ENCODE measurements at regions of chr21 and their contacts with region 1.

Region 1: GRCh38 chr21:36156339-36156814 is 247 bp upstream of the DOP1B start:
- DNase-seq: peak; percentile 99 to 100 (median 100)
- ATAC-seq: peak; percentile 94
- H3K4me3 ChIP-seq: peak overlapping the region; percentile 81
- H3K4me3 Mint-ChIP-seq: peak overlapping the region; percentile 71 to 91 (median 86)
- H3K27ac ChIP-seq: peak overlapping the region; percentile 81
- H3K27ac Mint-ChIP-seq: peak overlapping the region in 8 of 9 donors; percentile 46 to 88 (median 58)
- H3K4me1 ChIP-seq: peaks cover 11% of the 10 kb centered on the region in 2 donors
- H3K4me1 Mint-ChIP-seq: peaks cover 11 to 45% (median 33%) of the 10 kb centered on the region in 7 donors
- H3K27me3 ChIP-seq: no peaks in the 10 kb centered on the region
- H3K27me3 Mint-ChIP-seq: peaks cover 0 to 13% (median 0%) of the 10 kb centered on the region in 5 donors

Region 2: GRCh38 chr21:36005018-36005417 is 151.4 kb before region 1 on chr21:
- CTCF ChIA-PET with region 1: no interaction called
- POLR2A ChIA-PET with region 1: no interaction called
- intact Hi-C with region 1: no loop called
- DNase-seq: no peak
- ATAC-seq: no peak
- H3K4me3 ChIP-seq: no peak overlapping the region
- H3K4me3 Mint-ChIP-seq: no peak overlapping the region
- H3K27ac ChIP-seq: no peak overlapping the region
- H3K27ac Mint-ChIP-seq: no peak overlapping the region
- H3K4me1 ChIP-seq: no peaks in the 10 kb centered on the region
- H3K4me1 Mint-ChIP-seq: no peaks in the 10 kb centered on the region
- H3K27me3 ChIP-seq: no peaks in the 10 kb centered on the region
- H3K27me3 Mint-ChIP-seq: peaks cover 8 to 28% (median 11%) of the 10 kb centered on the region in 5 donors

Region 3: GRCh38 chr21:36060159-36060921 is 96.0 kb before region 1 on chr21 and contains the start of gene SETD4:
- CTCF ChIA-PET with region 1: no interaction called
- POLR2A ChIA-PET with region 1: no interaction called
- intact Hi-C with region 1: loop called in 1 of 2 experiments (anchors 1 kb)
- DNase-seq: peak; percentile 91 to 97 (median 94)
- ATAC-seq: peak; percentile 93
- H3K4me3 ChIP-seq: peak within 1 kb of the TSS; percentile 80
- H3K4me3 Mint-ChIP-seq: peak within 1 kb of the TSS; percentile 88 to 98 (median 96)
- H3K27ac ChIP-seq: peak within 1 kb of the TSS; percentile 89
- H3K27ac Mint-ChIP-seq: peak within 1 kb of the TSS; percentile 96 to 98 (median 97)
- H3K4me1 ChIP-seq: no peaks in the 10 kb centered on the region
- H3K4me1 Mint-ChIP-seq: peaks cover 2 to 38% (median 24%) of the 10 kb centered on the region in 7 donors
- H3K27me3 ChIP-seq: no peaks in the 10 kb centered on the region
- H3K27me3 Mint-ChIP-seq: peaks cover 0 to 4% (median 0%) of the 10 kb centered on the region in 5 donors
- total RNA-seq, gene SETD4: 17.1 to 31.5 (median 20.9) TPM

Region 4: GRCh38 chr21:36141513-36141925 is 14.9 kb before region 1 on chr21:
- CTCF ChIA-PET with region 1: interaction called, 26 read pairs
- POLR2A ChIA-PET with region 1: interaction called, 5 read pairs
- intact Hi-C with region 1: loop called (anchors 1 kb)
- DNase-seq: peak; percentile 50 to 92 (median 84)
- ATAC-seq: peak; percentile 99
- H3K4me3 ChIP-seq: no peak overlapping the region
- H3K4me3 Mint-ChIP-seq: peak overlapping the region in 5 of 10 donors; percentile 1 to 15 (median 3)
- H3K27ac ChIP-seq: peak overlapping the region; percentile 74
- H3K27ac Mint-ChIP-seq: peak overlapping the region; percentile 16 to 92 (median 83)
- H3K4me1 ChIP-seq: peaks cover 18 to 19% of the 10 kb centered on the region in 2 donors
- H3K4me1 Mint-ChIP-seq: peaks cover 11 to 42% (median 39%) of the 10 kb centered on the region in 7 donors
- H3K27me3 ChIP-seq: no peaks in the 10 kb centered on the region
- H3K27me3 Mint-ChIP-seq: no peaks in the 10 kb centered on the region

Region 5: DNA sequence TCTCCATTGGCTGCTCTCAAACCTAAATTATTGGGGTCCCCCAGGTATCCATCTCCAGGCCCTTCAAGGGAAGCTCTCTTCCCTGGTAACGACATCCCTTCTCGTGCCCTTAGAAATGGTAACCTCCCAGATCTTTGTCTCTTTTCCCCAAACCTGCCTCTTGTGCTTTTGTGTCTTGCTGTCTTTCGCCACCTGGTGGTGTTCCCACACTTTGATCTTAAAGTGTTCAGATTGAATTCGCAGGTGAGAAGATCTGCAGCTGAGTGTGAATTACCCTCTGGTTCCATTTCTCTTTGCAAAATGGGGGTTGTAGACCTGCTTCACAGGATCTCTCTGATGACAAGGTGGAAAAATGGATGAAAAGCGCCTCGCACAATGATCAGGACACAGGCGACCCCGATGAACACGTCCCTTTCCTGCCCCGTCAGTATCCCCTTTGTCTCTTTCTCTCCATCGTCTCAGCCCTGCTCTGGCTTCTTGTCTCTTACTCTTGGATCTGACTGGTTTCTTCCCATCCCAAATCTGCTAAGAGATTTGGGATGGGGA is 53.3 kb after region 1 on chr21:
- CTCF ChIA-PET with region 1: interaction called, 7 read pairs
- POLR2A ChIA-PET with region 1: interaction called, 3 read pairs
- intact Hi-C with region 1: loop called (anchors 1 kb)
- DNase-seq: peak in 7 of 9 donors; percentile 20 to 57 (median 51)
- ATAC-seq: no peak
- H3K4me3 ChIP-seq: no peak overlapping the region
- H3K4me3 Mint-ChIP-seq: no peak overlapping the region
- H3K27ac ChIP-seq: no peak overlapping the region
- H3K27ac Mint-ChIP-seq: peak overlapping the region in 2 of 9 donors; percentile 3 to 38
- H3K4me1 ChIP-seq: no peaks in the 10 kb centered on the region
- H3K4me1 Mint-ChIP-seq: peaks cover 1 to 18% (median 9%) of the 10 kb centered on the region in 7 donors
- H3K27me3 ChIP-seq: no peaks in the 10 kb centered on the region
- H3K27me3 Mint-ChIP-seq: no peaks in the 10 kb centered on the region

Region 6: GRCh38 chr21:36297921-36298594 is 141.7 kb after region 1 on chr21:
- CTCF ChIA-PET with region 1: no interaction called
- POLR2A ChIA-PET with region 1: interaction called, 5 read pairs
- intact Hi-C with region 1: loop called in 1 of 2 experiments (anchors 1 kb)
- DNase-seq: peak; percentile 35 to 89 (median 87)
- ATAC-seq: peak; percentile 99
- H3K4me3 ChIP-seq: peak overlapping the region; percentile 52
- H3K4me3 Mint-ChIP-seq: peak overlapping the region; percentile 71 to 88 (median 84)
- H3K27ac ChIP-seq: peak overlapping the region; percentile 84
- H3K27ac Mint-ChIP-seq: peak overlapping the region; percentile 91 to 100 (median 98)
- H3K4me1 ChIP-seq: peaks cover 21 to 36% of the 10 kb centered on the region in 2 donors
- H3K4me1 Mint-ChIP-seq: peaks cover 24 to 53% (median 40%) of the 10 kb centered on the region in 7 donors
- H3K27me3 ChIP-seq: no peaks in the 10 kb centered on the region
- H3K27me3 Mint-ChIP-seq: no peaks in the 10 kb centered on the region

Region 7: GRCh38 chr21:36385233-36386030 is 229.1 kb after region 1 on chr21 and contains the start of gene CHAF1B:
- CTCF ChIA-PET with region 1: no interaction called
- POLR2A ChIA-PET with region 1: no interaction called
- intact Hi-C with region 1: loop called (anchors 1 kb)
- DNase-seq: peak; percentile 63 to 94 (median 82)
- ATAC-seq: peak; percentile 99
- H3K4me3 ChIP-seq: peak within 1 kb of the TSS; percentile 77
- H3K4me3 Mint-ChIP-seq: peak within 1 kb of the TSS; percentile 70 to 89 (median 85)
- H3K27ac ChIP-seq: peak within 1 kb of the TSS; percentile 68
- H3K27ac Mint-ChIP-seq: peak within 1 kb of the TSS in 8 of 9 donors; percentile 7 to 83 (median 56)
- H3K4me1 ChIP-seq: peaks cover 0 to 4% of the 10 kb centered on the region in 2 donors
- H3K4me1 Mint-ChIP-seq: peaks cover 4 to 30% (median 6%) of the 10 kb centered on the region in 7 donors
- H3K27me3 ChIP-seq: no peaks in the 10 kb centered on the region
- H3K27me3 Mint-ChIP-seq: no peaks in the 10 kb centered on the region
- total RNA-seq, gene CHAF1B: 1.5 to 21.4 (median 4.0) TPM

Region 8: GRCh38 chr21:37267269-37268184 is 1111.2 kb after region 1 on chr21 and contains the start of gene VPS26C:
- CTCF ChIA-PET with region 1: no interaction called
- POLR2A ChIA-PET with region 1: no interaction called
- intact Hi-C with region 1: loop called (anchors 1 to 5 kb)
- DNase-seq: peak; percentile 91 to 98 (median 97)
- ATAC-seq: peak; percentile 93
- H3K4me3 ChIP-seq: peak within 1 kb of the TSS; percentile 95
- H3K4me3 Mint-ChIP-seq: peak within 1 kb of the TSS; percentile 88 to 96 (median 94)
- H3K27ac ChIP-seq: peak within 1 kb of the TSS; percentile 90
- H3K27ac Mint-ChIP-seq: peak within 1 kb of the TSS; percentile 94 to 99 (median 98)
- H3K4me1 ChIP-seq: peaks cover 5 to 7% of the 10 kb centered on the region in 2 donors
- H3K4me1 Mint-ChIP-seq: peaks cover 14 to 62% (median 46%) of the 10 kb centered on the region in 7 donors
- H3K27me3 ChIP-seq: no peaks in the 10 kb centered on the region
- H3K27me3 Mint-ChIP-seq: peaks cover 0 to 11% (median 0%) of the 10 kb centered on the region in 5 donors
- total RNA-seq, gene VPS26C: 46.8 to 83.5 (median 77.7) TPM